Caco-2 (cell line): ENCODE measurements at regions of chr17 and their contacts with region 1.

Region 1: DNA sequence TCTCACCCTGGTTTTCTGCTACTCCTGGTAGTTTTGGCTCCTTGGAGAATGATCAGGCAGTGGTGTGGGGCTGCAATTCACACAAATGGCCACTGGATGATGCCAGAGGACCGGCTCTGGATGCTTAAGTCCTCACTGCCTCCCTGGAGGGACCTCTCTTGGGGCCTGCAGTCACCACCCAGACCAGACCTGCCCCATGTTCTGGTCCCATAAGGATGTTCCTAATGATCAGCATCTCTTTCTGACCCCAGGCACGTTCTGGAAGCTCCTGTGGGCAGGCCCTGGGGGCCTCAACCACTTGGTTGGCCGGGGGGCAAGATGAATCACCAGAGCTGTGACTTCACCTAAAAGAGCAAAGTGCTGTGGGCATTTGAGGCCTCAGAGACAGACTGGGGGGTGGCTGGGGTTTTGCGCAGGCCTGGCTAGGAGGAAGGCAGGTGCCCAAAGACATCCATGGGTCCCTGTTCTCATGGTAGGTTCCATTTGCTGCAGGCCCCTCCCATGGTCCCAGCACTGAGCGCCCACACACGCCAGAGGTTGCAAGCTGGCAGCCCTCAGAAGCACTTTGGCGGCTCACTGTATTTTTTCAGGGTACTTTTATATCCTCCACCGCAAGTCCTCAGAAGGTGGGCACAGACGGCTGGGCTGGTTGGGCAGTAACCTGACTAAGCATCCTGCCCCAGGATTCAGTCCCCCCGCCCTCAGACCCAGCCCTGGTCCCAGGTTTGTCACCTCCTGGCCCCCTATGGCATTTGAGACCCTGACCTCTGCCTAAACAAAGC is 53.2 kb downstream of the NT5M start:
- DNase-seq: peak; percentile 83 to 87
- H3K4me3 ChIP-seq: no peak overlapping the region
- H3K4me3 Mint-ChIP-seq: no peak overlapping the region
- H3K27ac Mint-ChIP-seq: peak overlapping the region; percentile 40
- H3K4me1 ChIP-seq: peaks cover 5% of the 10 kb centered on the region; the same call in 1 of the 2 replicates
- H3K4me1 Mint-ChIP-seq: no peaks in the 10 kb centered on the region
- H3K27me3 ChIP-seq: no peaks in the 10 kb centered on the region
- H3K27me3 Mint-ChIP-seq: no peaks in the 10 kb centered on the region
- CTCF ChIP-seq: peak; percentile 99 to 100

Region 2: GRCh38 chr17:17387830-17388441 is 31.6 kb after region 1 on chr17:
- CTCF ChIA-PET with region 1: interaction called, 6 read pairs
- POLR2A ChIA-PET with region 1: no interaction called
- intact Hi-C with region 1: loop called (anchors 1 kb)
- DNase-seq: peak; percentile 86 to 88
- H3K4me3 ChIP-seq: no peak overlapping the region
- H3K4me3 Mint-ChIP-seq: no peak overlapping the region
- H3K27ac Mint-ChIP-seq: no peak overlapping the region
- H3K4me1 ChIP-seq: peaks cover 12% of the 10 kb centered on the region
- H3K4me1 Mint-ChIP-seq: peaks cover 21% of the 10 kb centered on the region
- H3K27me3 ChIP-seq: no peaks in the 10 kb centered on the region
- H3K27me3 Mint-ChIP-seq: no peaks in the 10 kb centered on the region
- CTCF ChIP-seq: peak; percentile 78 to 94

Region 3: GRCh38 chr17:17401271-17401781 is 45.0 kb after region 1 on chr17:
- CTCF ChIA-PET with region 1: no interaction called
- POLR2A ChIA-PET with region 1: interaction called, 3 read pairs
- intact Hi-C with region 1: loop called (anchors 5 kb)
- DNase-seq: peak in 1 of 2 experiments; percentile 13
- H3K4me3 ChIP-seq: no peak overlapping the region
- H3K4me3 Mint-ChIP-seq: no peak overlapping the region
- H3K27ac Mint-ChIP-seq: no peak overlapping the region
- H3K4me1 ChIP-seq: peaks cover 4% of the 10 kb centered on the region; the same call in 1 of the 2 replicates
- H3K4me1 Mint-ChIP-seq: peaks cover 4% of the 10 kb centered on the region
- H3K27me3 ChIP-seq: no peaks in the 10 kb centered on the region
- H3K27me3 Mint-ChIP-seq: no peaks in the 10 kb centered on the region
- CTCF ChIP-seq: no peak

Region 4: DNA sequence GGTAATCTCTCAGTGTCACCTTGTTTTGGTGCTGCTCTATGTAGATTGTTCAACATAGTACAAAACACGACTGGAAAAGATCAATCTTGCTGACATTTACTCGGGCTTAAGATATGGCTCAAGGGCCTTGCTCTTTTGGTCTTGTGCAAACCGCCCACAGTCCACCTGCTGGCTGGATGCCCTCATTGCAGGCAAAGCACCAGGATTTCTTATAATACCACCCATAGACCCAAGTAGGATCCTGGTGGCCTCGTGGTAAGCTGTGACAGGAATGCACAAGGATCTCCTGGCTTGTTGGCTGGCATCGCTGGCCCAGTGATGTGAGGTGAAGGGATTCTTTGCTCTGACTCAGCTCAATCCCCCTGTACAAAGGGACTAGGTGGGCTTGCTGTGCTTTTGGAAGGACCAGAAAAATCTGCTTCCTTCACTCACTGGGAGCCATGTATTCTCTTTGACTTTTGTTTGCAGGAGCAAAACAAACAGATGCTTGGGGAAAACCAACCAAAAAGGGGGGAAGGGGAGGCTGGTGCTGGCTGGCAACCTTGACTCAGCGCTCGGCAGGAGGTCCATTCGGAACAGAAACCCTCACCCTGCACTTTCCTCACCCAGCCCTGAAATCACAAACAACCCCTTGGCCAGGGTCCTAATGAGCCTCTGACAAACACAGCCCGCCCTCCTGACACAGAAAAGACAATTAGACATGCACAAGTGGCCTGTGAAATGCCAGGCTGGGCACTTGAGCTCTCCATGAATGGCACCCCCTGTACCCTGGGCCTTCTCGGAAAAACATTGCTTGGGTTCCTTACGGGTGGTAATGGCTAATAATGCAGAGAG is 83.9 kb after region 1 on chr17:
- CTCF ChIA-PET with region 1: interaction called, 8 read pairs
- POLR2A ChIA-PET with region 1: no interaction called
- intact Hi-C with region 1: loop called (anchors 1 kb)
- DNase-seq: peak; percentile 80 to 83
- H3K4me3 ChIP-seq: no peak overlapping the region
- H3K4me3 Mint-ChIP-seq: no peak overlapping the region
- H3K27ac Mint-ChIP-seq: no peak overlapping the region
- H3K4me1 ChIP-seq: peaks cover 57% of the 10 kb centered on the region
- H3K4me1 Mint-ChIP-seq: peaks cover 26% of the 10 kb centered on the region
- H3K27me3 ChIP-seq: no peaks in the 10 kb centered on the region
- H3K27me3 Mint-ChIP-seq: no peaks in the 10 kb centered on the region
- CTCF ChIP-seq: peak; percentile 67 to 74

Region 5: DNA sequence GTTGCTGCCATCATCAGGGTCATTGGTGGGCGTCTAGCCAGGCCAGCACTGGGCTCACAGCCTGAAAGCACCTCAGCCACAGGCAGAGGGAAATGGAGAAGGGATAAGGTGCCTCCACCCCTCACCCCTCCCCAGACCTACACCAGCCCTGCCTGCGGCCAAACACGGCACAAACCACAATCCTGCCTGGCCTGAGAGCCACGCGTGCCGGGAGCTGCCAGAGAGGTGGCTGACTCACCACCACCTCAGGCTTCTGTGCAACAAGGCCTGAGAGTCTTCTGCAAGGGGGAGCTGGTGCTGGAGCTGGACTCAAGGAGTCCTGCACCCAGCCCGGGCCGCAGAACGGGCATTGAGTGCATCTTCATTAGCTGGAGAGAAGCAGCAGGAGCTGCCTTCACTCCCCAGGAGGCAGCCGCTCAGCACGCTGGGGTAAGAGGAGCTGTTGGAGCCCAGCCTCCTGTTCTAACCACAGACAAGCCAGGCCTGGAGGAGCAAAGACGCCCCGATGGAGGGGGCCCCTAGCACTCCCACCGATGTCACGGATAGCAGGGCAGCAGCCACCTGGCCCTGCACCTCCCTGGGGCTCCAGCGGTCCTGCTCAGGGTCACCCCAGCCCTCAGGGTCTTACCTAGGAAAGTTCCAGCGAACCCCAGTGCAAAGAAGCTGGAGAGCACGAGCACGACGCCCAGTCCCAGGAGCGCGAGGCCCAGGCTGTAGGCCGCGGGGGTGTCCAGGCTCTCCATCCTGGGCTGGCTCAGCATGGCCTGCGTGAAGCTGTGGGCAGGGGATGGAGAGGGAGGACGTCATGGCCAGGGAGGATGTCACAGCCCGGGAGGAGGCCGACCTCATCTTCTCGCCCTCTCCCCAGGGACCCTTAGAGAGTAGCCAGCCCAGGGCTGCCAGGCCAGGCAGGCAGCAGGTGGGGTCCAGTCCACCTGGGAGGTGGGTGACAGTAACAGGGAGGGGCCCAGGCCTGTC is 155.8 kb after region 1 on chr17:
- CTCF ChIA-PET with region 1: no interaction called
- POLR2A ChIA-PET with region 1: no interaction called
- intact Hi-C with region 1: no loop called
- DNase-seq: no peak
- H3K4me3 ChIP-seq: no peak overlapping the region
- H3K4me3 Mint-ChIP-seq: no peak overlapping the region
- H3K27ac Mint-ChIP-seq: no peak overlapping the region
- H3K4me1 ChIP-seq: no peaks in the 10 kb centered on the region
- H3K4me1 Mint-ChIP-seq: no peaks in the 10 kb centered on the region
- H3K27me3 ChIP-seq: no peaks in the 10 kb centered on the region
- H3K27me3 Mint-ChIP-seq: no peaks in the 10 kb centered on the region
- CTCF ChIP-seq: no peak

Region 6: GRCh38 chr17:17568749-17569195 is 212.4 kb after region 1 on chr17:
- CTCF ChIA-PET with region 1: interaction called, 7 read pairs
- POLR2A ChIA-PET with region 1: no interaction called
- intact Hi-C with region 1: loop called (anchors 1 kb)
- DNase-seq: peak; percentile 85 to 92
- H3K4me3 ChIP-seq: no peak overlapping the region
- H3K4me3 Mint-ChIP-seq: no peak overlapping the region
- H3K27ac Mint-ChIP-seq: peak overlapping the region; percentile 76
- H3K4me1 ChIP-seq: peaks cover 17% of the 10 kb centered on the region
- H3K4me1 Mint-ChIP-seq: peaks cover 12% of the 10 kb centered on the region
- H3K27me3 ChIP-seq: no peaks in the 10 kb centered on the region
- H3K27me3 Mint-ChIP-seq: no peaks in the 10 kb centered on the region
- CTCF ChIP-seq: peak; percentile 93 to 95

Region 7: GRCh38 chr17:17613708-17614114 is 257.4 kb after region 1 on chr17:
- CTCF ChIA-PET with region 1: interaction called, 15 read pairs
- POLR2A ChIA-PET with region 1: no interaction called
- intact Hi-C with region 1: loop called (anchors 1 kb)
- DNase-seq: peak; percentile 78 to 80
- H3K4me3 ChIP-seq: no peak overlapping the region
- H3K4me3 Mint-ChIP-seq: no peak overlapping the region
- H3K27ac Mint-ChIP-seq: no peak overlapping the region
- H3K4me1 ChIP-seq: no peaks in the 10 kb centered on the region
- H3K4me1 Mint-ChIP-seq: no peaks in the 10 kb centered on the region
- H3K27me3 ChIP-seq: no peaks in the 10 kb centered on the region
- H3K27me3 Mint-ChIP-seq: no peaks in the 10 kb centered on the region
- CTCF ChIP-seq: peak; percentile 55 to 86

Region 8: DNA sequence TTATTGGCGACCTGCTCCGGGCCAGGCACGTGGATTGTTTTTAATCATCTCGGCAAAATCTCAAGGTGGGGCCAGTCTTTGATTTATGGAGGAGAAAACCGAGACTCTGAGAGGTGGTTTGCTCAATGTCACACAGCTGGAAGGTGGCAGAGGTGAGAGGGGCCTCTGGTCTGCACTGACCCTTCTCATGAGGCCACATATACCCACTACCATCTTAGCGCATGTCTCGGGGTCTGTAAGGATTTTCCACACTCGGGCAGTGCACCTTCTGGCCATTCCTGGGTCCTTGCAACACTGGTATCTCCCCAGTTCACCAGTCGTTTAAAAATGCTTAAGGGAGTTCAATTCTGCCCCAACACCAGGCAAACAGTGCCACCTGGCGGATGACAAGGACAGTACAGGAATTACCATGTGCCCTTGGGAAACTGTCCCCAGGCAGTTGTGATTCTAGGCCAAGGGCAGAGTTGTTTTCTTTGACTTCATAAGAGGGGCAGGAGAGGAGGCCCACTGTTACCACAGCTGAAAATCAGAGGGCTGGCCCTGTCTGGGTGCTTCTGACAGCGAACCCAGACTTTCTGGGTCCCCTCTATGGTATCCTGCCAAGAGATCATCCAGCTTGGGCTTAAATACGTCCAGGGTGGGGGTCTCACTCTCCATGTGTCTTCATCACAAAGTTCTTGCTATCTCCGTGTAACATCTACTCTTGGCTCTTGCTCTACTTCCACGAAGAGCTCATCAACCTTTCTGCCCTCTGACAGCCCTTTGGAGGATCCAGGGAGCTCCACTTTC is 285.5 kb after region 1 on chr17:
- CTCF ChIA-PET with region 1: interaction called, 9 read pairs
- POLR2A ChIA-PET with region 1: no interaction called
- intact Hi-C with region 1: loop called (anchors 1 kb)
- DNase-seq: peak; percentile 79 to 85
- H3K4me3 ChIP-seq: no peak overlapping the region
- H3K4me3 Mint-ChIP-seq: no peak overlapping the region
- H3K27ac Mint-ChIP-seq: no peak overlapping the region
- H3K4me1 ChIP-seq: no peaks in the 10 kb centered on the region
- H3K4me1 Mint-ChIP-seq: peaks cover 3% of the 10 kb centered on the region
- H3K27me3 ChIP-seq: no peaks in the 10 kb centered on the region; the same call in 1 of the 2 replicates
- H3K27me3 Mint-ChIP-seq: no peaks in the 10 kb centered on the region
- CTCF ChIP-seq: peak; percentile 94 to 95